CD14-positive monocyte (primary cell): ENCODE measurements at regions of chr3 and their contacts with region 1.

Region 1: GRCh38 chr3:185282696-185283394 is 29.0 kb upstream of the EHHADH start:
- DNase-seq: peak; percentile 83 to 94 (median 90)
- H3K4me3 ChIP-seq: peak overlapping the region; percentile 76 to 92 (median 89)
- H3K4me3 Mint-ChIP-seq: peak overlapping the region; percentile 95 to 100
- H3K27ac ChIP-seq: peak overlapping the region; percentile 2 to 72
- H3K27ac Mint-ChIP-seq: peak overlapping the region; percentile 86 to 97 (median 93)
- H3K4me1 ChIP-seq: peaks cover 16 to 21% of the 10 kb centered on the region in 2 donors
- H3K4me1 Mint-ChIP-seq: peaks cover 26% of the 10 kb centered on the region
- H3K27me3 ChIP-seq: no peaks in the 10 kb centered on the region
- H3K27me3 Mint-ChIP-seq: peaks cover 0 to 4% (median 2%) of the 10 kb centered on the region in 3 donors
- CTCF ChIP-seq: no peak

Region 2: DNA sequence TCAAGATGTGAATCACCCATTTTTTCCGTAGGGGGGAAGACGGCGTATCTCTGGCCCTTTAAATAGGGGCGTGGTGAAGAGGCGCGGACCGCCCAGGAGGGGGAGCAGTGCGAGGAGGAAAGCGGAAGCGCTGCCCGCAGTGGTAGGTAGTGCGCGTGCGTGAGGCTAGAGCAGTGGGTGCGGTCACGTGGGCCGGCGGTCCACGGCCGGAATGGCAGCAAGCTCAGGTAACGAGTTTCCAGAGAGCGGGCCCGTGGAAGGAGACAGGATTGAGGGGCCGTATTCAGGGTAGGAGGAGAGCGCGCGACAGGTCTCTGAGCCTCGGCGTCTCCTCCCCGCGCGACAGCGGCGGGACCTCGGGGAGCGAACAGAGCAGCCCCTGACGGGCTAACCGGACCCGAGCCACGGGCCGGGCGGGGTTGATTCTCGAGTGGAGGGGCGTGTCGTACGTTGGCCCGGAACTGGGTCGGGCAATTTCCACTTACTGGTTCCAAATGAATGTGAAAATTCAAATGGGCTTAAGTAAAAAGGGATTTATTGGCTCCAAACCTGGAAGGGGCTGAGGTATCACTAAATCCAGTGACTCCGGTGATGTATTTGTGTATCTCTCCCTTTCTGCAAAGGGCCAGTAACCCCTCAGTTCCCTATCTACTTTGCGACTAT is 470.7 kb before region 1 on chr3 and contains the start of gene VPS8:
- intact Hi-C with region 1: loop called in 1 of 2 experiments (anchors 10 kb)
- DNase-seq: peak; percentile 96 to 99 (median 97)
- H3K4me3 ChIP-seq: peak within 1 kb of the TSS; percentile 79 to 91 (median 80)
- H3K4me3 Mint-ChIP-seq: peak within 1 kb of the TSS; percentile 93 to 99
- H3K27ac ChIP-seq: peak within 1 kb of the TSS; percentile 71 to 87
- H3K27ac Mint-ChIP-seq: peak within 1 kb of the TSS; percentile 89 to 98 (median 96)
- H3K4me1 ChIP-seq: peaks cover 37 to 53% of the 10 kb centered on the region in 2 donors
- H3K4me1 Mint-ChIP-seq: peaks cover 44% of the 10 kb centered on the region
- H3K27me3 ChIP-seq: no peaks in the 10 kb centered on the region
- H3K27me3 Mint-ChIP-seq: no peaks in the 10 kb centered on the region
- CTCF ChIP-seq: peak; percentile 55
- polyA plus RNA-seq, gene VPS8: 22.0 to 42.3 (median 29.2) TPM

Region 3: GRCh38 chr3:185341616-185342457 is 59.0 kb after region 1 on chr3:
- intact Hi-C with region 1: loop called in 1 of 2 experiments (anchors 10 kb)
- DNase-seq: no peak
- H3K4me3 ChIP-seq: no peak overlapping the region
- H3K4me3 Mint-ChIP-seq: no peak overlapping the region
- H3K27ac ChIP-seq: no peak overlapping the region
- H3K27ac Mint-ChIP-seq: peak overlapping the region in 1 of 7 donors; percentile 41
- H3K4me1 ChIP-seq: peaks cover 18 to 29% of the 10 kb centered on the region in 2 donors
- H3K4me1 Mint-ChIP-seq: peaks cover 36% of the 10 kb centered on the region
- H3K27me3 ChIP-seq: no peaks in the 10 kb centered on the region
- H3K27me3 Mint-ChIP-seq: no peaks in the 10 kb centered on the region
- CTCF ChIP-seq: no peak